HAP-1 (cell line): ENCODE measurements at regions of chr2 and their contacts with region 1.

Region 1: GRCh38 chr2:204691911-204692510 is 146.7 kb downstream of the PARD3B start:
- DNase-seq: peak; percentile 63 to 65
- H3K4me3 ChIP-seq: no peak overlapping the region
- H3K4me1 ChIP-seq: peaks cover 10% of the 10 kb centered on the region
- H3K27me3 ChIP-seq: no peaks in the 10 kb centered on the region

Region 2: DNA sequence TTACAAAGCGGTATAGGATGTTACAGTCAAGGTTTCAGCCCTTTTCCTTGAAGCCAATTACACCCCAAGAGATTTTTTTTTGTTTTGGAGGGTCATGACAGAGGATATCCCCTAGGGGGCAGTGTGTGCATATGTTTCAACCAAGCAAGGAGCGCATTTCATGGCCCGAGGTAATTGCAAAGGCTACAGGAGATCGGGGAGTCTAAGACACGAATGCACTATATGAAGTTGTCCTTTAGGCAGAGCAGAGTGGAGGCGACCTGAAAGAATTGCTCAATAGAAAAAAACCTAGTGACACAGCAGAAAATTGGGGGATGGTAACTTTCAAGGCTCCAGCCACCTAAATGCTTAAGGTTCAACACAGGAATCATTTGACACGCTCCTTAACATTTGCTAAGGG is 366.5 kb before region 1 on chr2:
- in situ Hi-C with region 1: loop called (anchors 25 kb)
- DNase-seq: peak; percentile 48 to 76
- H3K4me3 ChIP-seq: no peak overlapping the region
- H3K4me1 ChIP-seq: no peaks in the 10 kb centered on the region
- H3K27me3 ChIP-seq: no peaks in the 10 kb centered on the region

Region 3: DNA sequence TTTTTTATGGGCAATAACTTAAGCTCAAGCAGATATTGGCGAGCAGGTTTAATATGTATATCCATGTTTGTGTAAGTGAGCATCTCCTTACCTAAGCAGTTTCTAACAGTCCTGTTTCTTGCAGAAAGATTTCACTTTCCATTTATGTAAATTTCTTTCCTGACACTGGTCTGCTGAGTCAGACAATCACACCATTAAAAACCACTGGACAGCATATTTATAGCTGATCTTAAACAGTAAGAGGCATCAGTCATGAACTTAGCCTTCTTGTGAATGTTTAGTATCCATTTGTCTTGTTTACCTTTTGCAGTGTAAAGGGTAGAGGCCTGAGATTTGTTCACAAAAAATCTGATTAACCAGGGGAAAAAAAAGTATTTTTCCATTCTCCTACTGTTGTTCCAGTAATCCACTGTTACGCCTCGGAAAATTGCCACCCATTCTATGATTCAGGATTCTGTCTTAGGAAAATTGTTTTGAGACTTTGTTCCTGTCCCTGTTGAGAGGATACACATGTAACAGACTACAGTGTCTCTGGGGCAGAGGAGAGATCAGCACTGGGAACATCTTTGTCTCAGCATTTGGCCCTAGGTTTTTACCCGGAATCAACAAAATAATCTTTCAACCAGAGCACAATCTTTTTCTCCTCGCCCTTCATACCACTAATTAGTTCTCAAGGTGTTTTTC is 469.3 kb after region 1 on chr2:
- in situ Hi-C with region 1: no loop called
- DNase-seq: no peak
- H3K4me3 ChIP-seq: no peak overlapping the region
- H3K4me1 ChIP-seq: peaks cover 5% of the 10 kb centered on the region; the same call in 1 of the 2 replicates
- H3K27me3 ChIP-seq: no peaks in the 10 kb centered on the region